ENCODE measurements at regions of chr2 and their contacts with region 1.

Region 1: DNA sequence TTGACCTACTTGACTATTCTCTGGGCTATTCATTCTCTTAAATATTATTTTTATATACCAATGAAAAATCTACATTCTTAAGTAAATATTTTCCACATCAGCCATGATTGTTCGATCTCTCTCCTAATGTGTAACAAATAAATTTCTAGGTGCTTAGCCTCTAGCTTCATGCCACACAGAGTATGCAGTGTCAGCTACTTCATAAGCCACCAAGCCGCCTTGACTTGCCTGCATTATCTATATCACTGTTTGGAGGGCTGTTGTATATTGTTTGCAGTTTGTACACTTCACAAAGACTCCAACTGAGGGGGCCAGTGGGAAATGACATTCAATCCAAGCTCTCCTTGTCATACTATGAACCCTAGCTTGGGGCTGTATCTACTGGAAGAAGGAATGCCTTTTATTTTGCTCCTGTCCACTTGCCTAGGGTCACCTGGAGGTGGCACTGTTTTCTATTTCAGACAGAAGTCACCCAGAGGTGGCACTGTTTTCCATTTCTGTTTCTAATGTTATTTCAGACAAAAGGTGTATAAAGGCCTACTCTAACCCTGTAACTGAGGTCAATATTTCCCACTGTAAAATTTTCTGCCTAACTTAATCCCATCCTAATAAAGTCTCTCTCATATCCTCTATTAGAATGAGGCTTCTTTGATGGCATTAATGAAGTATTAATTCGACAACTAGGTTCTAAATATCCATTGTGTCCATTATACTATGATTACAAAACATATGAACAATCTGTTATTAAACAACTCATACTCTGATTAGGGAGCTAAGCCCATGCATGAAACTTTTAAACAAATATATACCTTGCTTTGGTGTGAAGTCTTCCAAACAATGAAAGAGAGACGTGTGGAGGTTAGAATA is 36.4 kb downstream of the COL5A2 start:
- DNase-seq: peak; percentile 66
- ATAC-seq: peak; percentile 93
- H3K4me3 Mint-ChIP-seq: no peak overlapping the region
- H3K27ac Mint-ChIP-seq: no peak overlapping the region
- H3K4me1 Mint-ChIP-seq: no peaks in the 10 kb centered on the region
- H3K27me3 Mint-ChIP-seq: no peaks in the 10 kb centered on the region
- CTCF ChIP-seq: peak; percentile 86

Region 2: GRCh38 chr2:188902901-188903491 is 240.1 kb before region 1 on chr2:
- CTCF ChIA-PET with region 1: no interaction called
- POLR2A ChIA-PET with region 1: no interaction called
- intact Hi-C with region 1: no loop called
- DNase-seq: no peak
- ATAC-seq: no peak
- H3K4me3 Mint-ChIP-seq: no peak overlapping the region
- H3K27ac Mint-ChIP-seq: no peak overlapping the region
- H3K4me1 Mint-ChIP-seq: no peaks in the 10 kb centered on the region
- H3K27me3 Mint-ChIP-seq: peaks cover 1% of the 10 kb centered on the region
- CTCF ChIP-seq: no peak

Region 3: DNA sequence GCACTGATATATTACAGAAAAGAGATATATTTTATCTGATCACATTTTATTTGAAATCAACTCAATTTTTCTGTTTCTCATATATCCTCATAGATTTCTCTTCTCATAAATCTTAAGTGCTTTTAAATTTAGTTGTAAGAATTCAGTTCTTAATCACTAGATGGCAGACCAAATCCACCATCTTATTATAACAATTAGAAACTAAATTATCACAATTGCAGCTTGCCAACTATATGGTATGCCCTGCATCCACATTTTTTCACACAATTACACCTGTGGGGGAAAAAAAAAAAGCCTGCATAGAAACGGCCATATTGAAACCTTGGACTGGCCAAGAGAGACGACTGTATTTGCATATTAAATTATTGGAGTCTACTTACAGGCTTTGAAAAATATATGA is 28.0 kb before region 1 on chr2:
- CTCF ChIA-PET with region 1: interaction called, 33 read pairs
- POLR2A ChIA-PET with region 1: no interaction called
- intact Hi-C with region 1: no loop called
- DNase-seq: no peak
- ATAC-seq: no peak
- H3K4me3 Mint-ChIP-seq: no peak overlapping the region
- H3K27ac Mint-ChIP-seq: no peak overlapping the region
- H3K4me1 Mint-ChIP-seq: peaks cover 19% of the 10 kb centered on the region
- H3K27me3 Mint-ChIP-seq: no peaks in the 10 kb centered on the region
- CTCF ChIP-seq: peak; percentile 20

Region 4: DNA sequence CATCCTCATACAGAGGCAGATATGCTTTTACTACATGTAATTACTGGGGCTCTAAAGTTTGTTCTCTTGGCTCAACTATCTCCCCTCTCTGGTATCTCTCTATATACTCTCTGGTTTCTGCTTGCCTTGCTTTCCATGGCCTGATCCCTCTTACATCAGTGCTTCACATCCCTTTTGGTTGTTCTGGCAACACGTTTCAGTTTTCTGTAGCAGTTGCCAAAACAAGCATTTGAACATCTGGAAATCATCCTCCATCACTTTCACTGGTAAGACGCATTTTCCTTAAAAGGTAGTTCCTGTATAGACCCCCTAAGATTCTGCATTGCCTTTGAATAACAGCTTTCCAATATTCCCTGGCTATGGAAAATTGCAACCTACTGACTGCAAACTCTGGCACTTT is 10.5 kb after region 1 on chr2:
- CTCF ChIA-PET with region 1: interaction called, 18 read pairs
- POLR2A ChIA-PET with region 1: no interaction called
- intact Hi-C with region 1: no loop called
- DNase-seq: no peak
- ATAC-seq: no peak
- H3K4me3 Mint-ChIP-seq: no peak overlapping the region
- H3K27ac Mint-ChIP-seq: no peak overlapping the region
- H3K4me1 Mint-ChIP-seq: no peaks in the 10 kb centered on the region
- H3K27me3 Mint-ChIP-seq: no peaks in the 10 kb centered on the region
- CTCF ChIP-seq: no peak

Region 5: DNA sequence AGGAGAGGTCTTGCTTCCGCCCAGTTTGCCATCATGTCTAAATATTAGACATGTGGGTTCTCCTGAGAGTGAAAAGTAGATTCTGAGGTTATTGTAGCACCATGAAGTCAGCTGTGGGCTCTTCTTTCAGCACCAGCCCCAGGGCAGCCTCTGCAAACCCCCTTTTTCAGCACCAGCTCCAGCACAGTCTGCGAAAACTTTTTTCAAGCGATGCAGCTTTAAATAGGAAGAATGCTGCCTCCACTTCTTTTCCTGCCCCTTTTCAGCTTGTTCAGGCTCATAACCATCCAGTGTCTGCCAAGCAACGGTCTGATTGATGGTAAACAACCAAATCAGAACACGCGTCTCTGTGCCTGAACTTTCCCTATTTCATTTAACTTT is 36.4 kb after region 1 on chr2 and contains the start of gene COL5A2:
- CTCF ChIA-PET with region 1: interaction called, 10 read pairs
- POLR2A ChIA-PET with region 1: no interaction called
- intact Hi-C with region 1: no loop called
- DNase-seq: peak; percentile 8
- ATAC-seq: no peak
- H3K4me3 Mint-ChIP-seq: peak within 1 kb of the TSS; percentile 1
- H3K27ac Mint-ChIP-seq: no peak within 1 kb of the TSS
- H3K4me1 Mint-ChIP-seq: peaks cover 12% of the 10 kb centered on the region
- H3K27me3 Mint-ChIP-seq: peaks cover 17% of the 10 kb centered on the region
- CTCF ChIP-seq: no peak
- total RNA-seq, gene COL5A2: 2.3 to 3.3 TPM

Region 6: DNA sequence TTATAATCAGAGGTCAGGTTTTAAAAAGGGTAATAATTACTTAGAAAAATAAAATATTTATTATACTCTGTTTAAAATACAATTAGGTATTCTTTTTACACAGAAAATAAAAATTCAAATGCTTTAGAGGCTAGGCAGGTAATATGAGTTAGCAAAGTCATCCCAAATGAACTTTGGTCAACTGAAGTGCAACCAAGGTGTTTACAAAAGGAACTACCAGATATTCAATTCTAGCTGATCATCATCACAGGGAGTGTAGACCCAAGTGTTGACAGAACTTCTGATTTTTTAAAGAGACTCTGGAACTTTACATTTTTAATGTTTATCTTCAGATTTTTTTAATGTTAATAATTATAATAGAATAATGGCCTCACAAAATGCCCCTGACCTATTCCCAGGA is 95.8 kb after region 1 on chr2:
- CTCF ChIA-PET with region 1: no interaction called
- POLR2A ChIA-PET with region 1: no interaction called
- intact Hi-C with region 1: no loop called
- DNase-seq: no peak
- ATAC-seq: no peak
- H3K4me3 Mint-ChIP-seq: no peak overlapping the region
- H3K27ac Mint-ChIP-seq: no peak overlapping the region
- H3K4me1 Mint-ChIP-seq: peaks cover 1% of the 10 kb centered on the region
- H3K27me3 Mint-ChIP-seq: no peaks in the 10 kb centered on the region
- CTCF ChIP-seq: no peak

Region 7: GRCh38 chr2:189287982-189288521 is 144.9 kb after region 1 on chr2:
- CTCF ChIA-PET with region 1: interaction called, 35 read pairs
- POLR2A ChIA-PET with region 1: no interaction called
- intact Hi-C with region 1: loop called (anchors 5 kb)
- DNase-seq: no peak
- ATAC-seq: peak; percentile 65
- H3K4me3 Mint-ChIP-seq: no peak overlapping the region
- H3K27ac Mint-ChIP-seq: peak overlapping the region; percentile 75
- H3K4me1 Mint-ChIP-seq: peaks cover 62% of the 10 kb centered on the region
- H3K27me3 Mint-ChIP-seq: no peaks in the 10 kb centered on the region
- CTCF ChIP-seq: peak; percentile 42

Region 8: DNA sequence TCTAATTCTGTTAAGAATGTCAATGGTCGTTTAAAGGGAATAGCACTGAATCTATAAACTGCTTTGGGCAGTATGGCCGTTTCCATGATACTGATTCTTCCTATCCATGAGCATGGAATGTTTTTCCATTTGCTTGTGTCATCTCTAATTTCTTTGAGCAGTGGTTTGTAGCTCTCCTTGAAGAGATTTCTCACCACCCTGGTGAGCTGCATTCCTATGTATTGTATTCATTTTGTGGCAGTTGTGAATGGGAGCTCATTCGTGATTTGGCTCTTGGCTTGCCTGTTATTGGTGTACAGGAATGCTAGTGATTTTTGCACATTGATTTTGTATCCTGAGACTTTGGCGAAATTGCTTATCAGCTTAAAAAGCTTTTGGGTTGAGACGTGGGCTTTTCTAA is 259.8 kb after region 1 on chr2:
- CTCF ChIA-PET with region 1: interaction called, 17 read pairs
- POLR2A ChIA-PET with region 1: no interaction called
- intact Hi-C with region 1: no loop called
- DNase-seq: no peak
- ATAC-seq: no peak
- H3K4me3 Mint-ChIP-seq: no peak overlapping the region
- H3K27ac Mint-ChIP-seq: no peak overlapping the region
- H3K4me1 Mint-ChIP-seq: peaks cover 8% of the 10 kb centered on the region
- H3K27me3 Mint-ChIP-seq: no peaks in the 10 kb centered on the region
- CTCF ChIP-seq: no peak